ENCODE measurements at regions of chr1 and their contacts with region 1.

Region 1: DNA sequence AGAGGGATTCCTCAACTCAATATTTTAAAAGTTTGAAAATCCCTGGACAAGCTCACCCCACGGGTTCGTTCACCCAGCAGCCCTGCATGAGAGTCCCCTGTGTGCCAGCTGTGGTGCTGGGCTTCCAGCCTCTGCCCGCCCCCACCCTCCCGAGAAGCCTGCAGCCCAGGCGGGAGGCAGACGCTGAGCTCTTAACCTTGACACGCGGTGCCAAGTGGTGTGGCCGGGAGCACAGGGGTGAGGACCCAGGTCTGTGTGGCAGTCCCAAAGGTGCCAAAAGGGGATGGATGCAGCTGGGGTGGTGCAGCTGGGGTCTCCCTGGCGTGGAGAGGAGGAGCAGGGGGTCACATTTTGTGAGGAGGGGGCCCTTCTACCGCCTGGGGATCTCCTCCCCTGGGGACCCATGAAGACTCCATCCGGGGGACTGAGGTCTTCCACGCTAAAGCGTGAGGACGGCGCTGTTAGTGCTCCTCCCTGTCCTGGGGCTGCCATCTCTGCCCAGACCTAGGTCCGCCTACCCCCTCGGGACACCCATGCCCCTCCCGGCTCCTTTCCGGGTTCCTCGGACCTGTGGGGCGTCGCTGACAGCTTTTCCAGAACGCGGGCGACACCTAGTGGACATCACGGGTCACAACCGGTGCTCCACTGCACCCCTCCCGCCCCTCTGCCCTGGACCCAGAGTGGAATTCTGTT is 12.9 kb downstream of the PLA2G2F start:
- DNase-seq: no peak
- H3K4me3 ChIP-seq: peak overlapping the region; percentile 34
- H3K27me3 ChIP-seq: no peaks in the 10 kb centered on the region; the same call in 1 of the 2 replicates
- CTCF ChIP-seq: peak; percentile 92

Region 2: GRCh38 chr1:19974822-19975416 is 177.1 kb before region 1 on chr1:
- CTCF ChIA-PET with region 1: interaction called, 62 read pairs
- POLR2A ChIA-PET with region 1: no interaction called
- DNase-seq: peak; percentile 8
- H3K4me3 ChIP-seq: no peak overlapping the region
- H3K27me3 ChIP-seq: no peaks in the 10 kb centered on the region; the same call in 1 of the 2 replicates
- CTCF ChIP-seq: peak; percentile 90

Region 3: DNA sequence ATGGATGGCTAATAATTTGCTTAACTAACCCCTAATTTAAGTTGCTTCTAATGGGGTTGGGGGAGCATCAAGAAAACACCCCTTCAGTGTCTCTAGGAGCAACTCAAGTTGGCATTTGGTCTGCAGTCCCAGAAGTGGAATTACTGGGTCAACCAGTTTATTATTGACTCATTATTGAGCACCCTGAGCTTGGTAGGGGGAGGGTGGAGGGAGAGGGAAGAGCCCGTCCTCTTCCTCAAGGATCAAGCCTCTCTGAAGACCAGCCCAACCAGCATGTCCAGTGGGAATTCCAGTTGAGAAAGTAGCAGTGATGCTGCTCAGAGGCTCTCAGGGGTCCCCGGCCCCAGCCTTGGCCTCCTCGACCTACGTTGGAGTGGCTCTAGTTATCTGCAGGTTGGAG is 15.0 kb before region 1 on chr1:
- CTCF ChIA-PET with region 1: interaction called, 10 read pairs
- POLR2A ChIA-PET with region 1: no interaction called
- DNase-seq: no peak
- H3K4me3 ChIP-seq: no peak overlapping the region
- H3K27me3 ChIP-seq: no peaks in the 10 kb centered on the region
- CTCF ChIP-seq: no peak

Region 4: GRCh38 chr1:20178634-20179370 is 26.8 kb after region 1 on chr1:
- CTCF ChIA-PET with region 1: interaction called, 10 read pairs
- POLR2A ChIA-PET with region 1: no interaction called
- DNase-seq: no peak
- H3K4me3 ChIP-seq: no peak overlapping the region
- H3K27me3 ChIP-seq: peaks cover 3% of the 10 kb centered on the region
- CTCF ChIP-seq: no peak

Region 5: GRCh38 chr1:20380616-20381035 is 228.6 kb after region 1 on chr1:
- CTCF ChIA-PET with region 1: no interaction called
- POLR2A ChIA-PET with region 1: no interaction called
- DNase-seq: peak; percentile 54
- H3K4me3 ChIP-seq: no peak overlapping the region
- H3K27me3 ChIP-seq: peaks cover 16% of the 10 kb centered on the region
- CTCF ChIP-seq: no peak